PC-3 (cell line): ENCODE measurements at regions of chr14 and their contacts with region 1.

Region 1: GRCh38 chr14:20989572-20990551 is at the start of gene METTL17:
- DNase-seq: peak; percentile 98
- ATAC-seq: peak; percentile 86
- H3K4me3 ChIP-seq: peak within 1 kb of the TSS; percentile 92
- H3K27ac ChIP-seq: peak within 1 kb of the TSS; percentile 58
- H3K4me1 ChIP-seq: peaks cover 42% of the 10 kb centered on the region
- H3K27me3 ChIP-seq: no peaks in the 10 kb centered on the region
- CTCF ChIP-seq: no peak; the same call in none of the 2 replicates
- total RNA-seq, gene METTL17: 83.0 and 99.0 TPM in 2 replicates

Region 2: GRCh38 chr14:20907214-20907613 is 82.6 kb before region 1 on chr14:
- CTCF ChIA-PET with region 1: no interaction called
- POLR2A ChIA-PET with region 1: no interaction called
- intact Hi-C with region 1: no loop called
- DNase-seq: peak; percentile 55
- ATAC-seq: 0 out of 2 replicates have a peak, but pooled peaks have one; percentile 35
- H3K4me3 ChIP-seq: no peak overlapping the region
- H3K27ac ChIP-seq: no peak overlapping the region
- H3K4me1 ChIP-seq: no peaks in the 10 kb centered on the region
- H3K27me3 ChIP-seq: peaks cover 10% of the 10 kb centered on the region; the same call in 1 of the 2 replicates
- CTCF ChIP-seq: no peak

Region 3: GRCh38 chr14:20970983-20971704 is 18.7 kb before region 1 on chr14:
- CTCF ChIA-PET with region 1: interaction called, 3 read pairs
- POLR2A ChIA-PET with region 1: no interaction called
- intact Hi-C with region 1: loop called (anchors 1 kb)
- DNase-seq: peak; percentile 89
- ATAC-seq: peak; percentile 87
- H3K4me3 ChIP-seq: peak overlapping the region; percentile 77
- H3K27ac ChIP-seq: no peak overlapping the region
- H3K4me1 ChIP-seq: peaks cover 9% of the 10 kb centered on the region
- H3K27me3 ChIP-seq: peaks cover 22% of the 10 kb centered on the region; the same call in 1 of the 2 replicates
- CTCF ChIP-seq: peak; percentile 89